ENCODE measurements at regions of chr2 and their contacts with region 1.

Region 1: DNA sequence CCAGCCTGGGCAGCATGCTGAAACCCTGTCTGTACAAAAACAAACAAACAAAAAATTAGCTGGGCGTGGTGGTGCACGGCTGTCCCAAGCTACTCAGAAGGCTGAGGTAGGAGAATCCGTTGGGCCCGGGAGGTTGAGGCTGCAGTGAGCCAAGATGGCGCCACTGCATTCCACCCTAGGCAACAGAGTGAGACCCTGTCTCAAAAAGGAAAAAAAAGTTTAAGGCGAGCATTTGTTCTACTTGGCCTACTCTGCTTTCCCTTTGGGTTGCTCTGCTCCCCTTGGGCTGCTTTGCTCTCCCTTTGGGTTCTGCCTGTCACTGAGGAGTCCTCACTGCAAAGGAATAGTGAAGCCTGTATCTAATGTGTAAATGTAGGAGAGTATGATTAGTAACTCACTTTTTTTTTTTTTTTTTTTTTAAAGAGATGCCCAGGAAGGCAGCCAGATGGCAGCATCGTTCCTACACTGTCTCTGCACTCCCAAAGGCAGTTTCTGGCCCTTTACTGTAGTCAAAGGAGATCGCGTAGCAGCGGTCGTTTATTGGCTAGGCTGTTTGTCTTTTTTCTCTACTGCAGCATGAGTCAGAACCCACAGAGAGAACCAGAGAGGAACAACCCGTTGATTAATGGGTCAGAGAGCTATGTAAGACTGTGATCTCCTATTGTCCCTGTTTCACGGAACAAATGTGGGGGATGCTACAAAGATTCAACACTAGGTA is 118.3 kb upstream of the CWC22 start:
- DNase-seq: peak; percentile 21 to 80 (median 58)
- H3K4me3 ChIP-seq: peak overlapping the region in 36 of 59 donors; percentile 1 to 47 (median 28)
- H3K27ac ChIP-seq: peak overlapping the region in 9 of 59 donors; percentile 16 to 63 (median 38)
- H3K27me3 ChIP-seq: peaks cover 0 to 6% (median 0%) of the 10 kb centered on the region in 45 donors
- CTCF ChIP-seq: peak; percentile 48 to 86 (median 72)

Region 2: GRCh38 chr2:180085144-180085543 is 40.3 kb before region 1 on chr2:
- intact Hi-C with region 1: no loop called
- DNase-seq: no peak
- H3K4me3 ChIP-seq: no peak overlapping the region
- H3K27ac ChIP-seq: no peak overlapping the region
- H3K27me3 ChIP-seq: peaks cover 0 to under 1% (median 0%) of the 10 kb centered on the region in 45 donors
- CTCF ChIP-seq: no peak

Region 3: DNA sequence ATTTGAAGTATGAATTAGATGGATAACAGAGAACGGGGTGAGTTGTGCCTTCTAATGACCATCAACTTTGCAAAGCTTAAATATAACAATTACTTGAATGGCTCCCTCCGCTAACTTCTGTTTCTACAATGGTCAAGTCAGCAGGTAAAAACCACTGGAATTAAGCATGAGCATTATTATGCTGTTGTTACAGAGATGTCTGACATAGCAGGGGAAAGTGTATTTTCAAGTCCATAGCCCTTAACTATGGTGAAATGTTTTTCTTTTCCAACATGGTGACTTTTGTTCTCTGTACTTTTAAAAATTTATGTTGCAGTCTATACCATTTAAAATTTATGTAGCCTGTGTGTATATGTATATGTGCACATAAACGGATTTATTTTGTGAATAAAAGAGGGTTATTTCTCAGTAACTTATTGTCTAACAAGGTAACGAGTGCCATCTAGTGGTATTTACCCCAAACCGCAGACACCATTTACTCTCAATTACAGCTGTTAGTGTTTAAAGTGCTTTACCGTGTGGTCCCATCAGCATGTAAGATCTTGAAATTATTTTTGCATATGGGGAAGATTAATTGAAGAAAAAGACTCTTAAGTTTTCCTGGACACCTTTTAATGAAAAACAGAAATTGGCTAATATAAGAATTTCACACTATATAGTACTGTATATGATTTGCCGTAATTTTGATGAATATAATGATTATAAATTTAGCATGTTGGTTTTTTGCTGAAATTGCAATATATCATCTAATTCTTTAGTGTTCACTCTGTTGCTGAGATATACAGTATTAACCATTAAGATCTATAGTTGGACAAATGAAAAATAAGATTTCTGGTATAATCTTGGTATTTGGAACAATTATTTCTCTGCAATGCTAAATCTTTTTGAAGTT is 933.2 kb after region 1 on chr2:
- intact Hi-C with region 1: loop called in 1 of 2 experiments (anchors 2 kb)
- DNase-seq: peak in 1 of 10 donors; percentile 28
- H3K4me3 ChIP-seq: no peak overlapping the region
- H3K27ac ChIP-seq: no peak overlapping the region
- H3K27me3 ChIP-seq: no peaks in the 10 kb centered on the region
- CTCF ChIP-seq: peak in 54 of 56 donors; percentile 25 to 73 (median 54)

Region 4: GRCh38 chr2:181466661-181467576 is 1341.5 kb after region 1 on chr2:
- intact Hi-C with region 1: loop called in 1 of 2 experiments (anchors 10 kb)
- DNase-seq: peak in 9 of 10 donors; percentile 24 to 72 (median 53)
- H3K4me3 ChIP-seq: no peak overlapping the region
- H3K27ac ChIP-seq: no peak overlapping the region
- H3K27me3 ChIP-seq: peaks cover 0 to 8% (median 0%) of the 10 kb centered on the region in 45 donors
- CTCF ChIP-seq: peak; percentile 56 to 86 (median 76)